Sigmoid colon (tissue), 7 donors: ENCODE measurements at regions of chr9 and their contacts with region 1.

Region 1: GRCh38 chr9:32968101-32969011 is 33.1 kb downstream of the APTX start:
- DNase-seq: no peak
- H3K4me3 ChIP-seq: no peak overlapping the region
- H3K27ac ChIP-seq: no peak overlapping the region
- H3K4me1 ChIP-seq: no peaks in the 10 kb centered on the region
- H3K27me3 ChIP-seq: no peaks in the 10 kb centered on the region
- CTCF ChIP-seq: peak; percentile 44 to 77 (median 52)
- EP300 ChIP-seq: no peak
- POLR2A ChIP-seq: no peak

Region 2: DNA sequence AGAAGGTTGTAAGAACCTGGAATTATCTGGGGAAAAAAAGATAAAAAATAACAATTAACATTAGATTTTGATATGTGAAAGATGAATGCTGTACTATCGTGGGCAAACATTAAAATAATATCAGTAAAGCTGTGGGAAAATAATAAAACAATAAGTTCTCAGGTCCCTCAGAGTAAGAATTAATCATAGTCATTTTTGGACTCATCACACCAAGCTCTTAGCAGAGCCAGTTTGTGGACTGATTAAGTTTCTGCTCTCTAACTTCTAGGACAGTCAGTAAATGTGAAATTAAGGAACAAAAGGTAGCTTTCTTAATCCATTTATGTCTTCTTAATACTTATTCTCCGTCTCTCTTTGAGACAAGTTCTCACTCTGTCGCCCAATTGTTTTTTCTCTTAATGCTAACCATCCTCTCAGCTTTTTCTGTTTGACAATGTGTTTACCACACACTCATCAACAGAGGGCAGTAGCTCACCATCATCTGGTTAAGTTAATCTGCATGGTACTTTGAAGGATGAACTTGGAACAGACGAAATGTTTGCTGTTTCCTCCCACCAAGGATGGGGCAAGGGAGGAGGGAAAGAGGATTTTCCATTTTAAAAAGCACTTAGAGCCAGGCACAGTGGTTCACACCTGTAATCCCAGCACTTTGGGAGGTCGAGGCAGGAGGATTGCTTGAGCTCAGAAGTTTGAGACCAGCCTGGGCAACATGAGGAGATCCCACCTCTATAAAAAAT is 589.2 kb before region 1 on chr9:
- intact Hi-C with region 1: loop called (anchors 5 kb)
- DNase-seq: no peak
- H3K4me3 ChIP-seq: no peak overlapping the region
- H3K27ac ChIP-seq: no peak overlapping the region
- H3K4me1 ChIP-seq: peaks cover 0 to 11% (median 6%) of the 10 kb centered on the region in 4 donors
- H3K27me3 ChIP-seq: no peaks in the 10 kb centered on the region
- CTCF ChIP-seq: peak; percentile 63 to 82 (median 72)
- EP300 ChIP-seq: no peak
- POLR2A ChIP-seq: no peak

Region 3: GRCh38 chr9:32589083-32589723 is 379.2 kb before region 1 on chr9:
- intact Hi-C with region 1: loop called (anchors 2 kb)
- DNase-seq: no peak
- H3K4me3 ChIP-seq: no peak overlapping the region
- H3K27ac ChIP-seq: no peak overlapping the region
- H3K4me1 ChIP-seq: no peaks in the 10 kb centered on the region
- H3K27me3 ChIP-seq: no peaks in the 10 kb centered on the region
- CTCF ChIP-seq: no peak
- EP300 ChIP-seq: no peak
- POLR2A ChIP-seq: no peak